ENCODE measurements at regions of chr6 and their contacts with region 1.

Region 1: GRCh38 chr6:56364827-56365313 is 117.5 kb upstream of the COL21A1 start:
- DNase-seq: no peak
- H3K4me3 ChIP-seq: no peak overlapping the region
- H3K27ac ChIP-seq: peak overlapping the region in 2 of 5 donors; percentile 11 to 32
- H3K4me1 ChIP-seq: peaks cover 10 to 28% of the 10 kb centered on the region in 2 donors
- H3K27me3 ChIP-seq: no peaks in the 10 kb centered on the region
- CTCF ChIP-seq: no peak
- POLR2A ChIP-seq: no peak

Region 2: DNA sequence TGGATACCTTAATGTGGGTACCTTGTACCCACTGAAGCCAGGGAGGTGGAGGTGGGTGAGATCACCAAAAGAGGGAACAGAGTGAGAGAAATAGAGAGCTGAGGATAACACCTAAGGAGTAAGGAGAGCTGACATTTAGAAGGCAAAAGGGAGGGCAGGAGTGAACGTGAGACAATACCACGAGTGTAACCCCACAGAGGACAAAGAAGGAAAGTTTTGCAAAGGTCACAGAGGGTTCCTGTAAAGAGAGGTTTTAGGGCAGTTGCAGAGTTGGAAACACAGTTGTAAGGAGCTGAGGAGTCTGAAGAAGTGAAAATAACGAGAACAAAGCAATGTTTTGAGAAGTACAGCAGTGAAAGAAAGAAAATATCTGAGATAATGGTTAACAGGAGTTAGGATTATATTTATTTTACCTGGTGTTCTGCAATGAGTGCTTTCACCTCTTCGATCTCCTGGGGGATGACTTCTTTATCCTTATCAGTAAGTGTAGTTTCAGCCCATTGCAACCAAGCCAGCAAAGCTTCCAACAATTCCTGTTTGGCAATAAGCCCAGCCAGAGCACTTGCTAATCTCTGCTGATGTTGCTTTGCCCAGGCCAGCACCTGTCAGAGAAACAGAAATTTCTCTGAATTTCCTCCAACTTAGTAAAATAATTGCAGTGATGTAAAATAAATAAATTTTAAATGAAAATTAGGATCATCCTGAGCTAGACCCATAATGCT is 111.0 kb after region 1 on chr6:
- intact Hi-C with region 1: no loop called
- DNase-seq: peak; percentile 59 to 89 (median 80)
- H3K4me3 ChIP-seq: no peak overlapping the region
- H3K27ac ChIP-seq: peak overlapping the region in 2 of 5 donors; percentile 27 to 52
- H3K4me1 ChIP-seq: peaks cover 16 to 21% of the 10 kb centered on the region in 2 donors
- H3K27me3 ChIP-seq: no peaks in the 10 kb centered on the region
- CTCF ChIP-seq: no peak
- POLR2A ChIP-seq: no peak

Region 3: DNA sequence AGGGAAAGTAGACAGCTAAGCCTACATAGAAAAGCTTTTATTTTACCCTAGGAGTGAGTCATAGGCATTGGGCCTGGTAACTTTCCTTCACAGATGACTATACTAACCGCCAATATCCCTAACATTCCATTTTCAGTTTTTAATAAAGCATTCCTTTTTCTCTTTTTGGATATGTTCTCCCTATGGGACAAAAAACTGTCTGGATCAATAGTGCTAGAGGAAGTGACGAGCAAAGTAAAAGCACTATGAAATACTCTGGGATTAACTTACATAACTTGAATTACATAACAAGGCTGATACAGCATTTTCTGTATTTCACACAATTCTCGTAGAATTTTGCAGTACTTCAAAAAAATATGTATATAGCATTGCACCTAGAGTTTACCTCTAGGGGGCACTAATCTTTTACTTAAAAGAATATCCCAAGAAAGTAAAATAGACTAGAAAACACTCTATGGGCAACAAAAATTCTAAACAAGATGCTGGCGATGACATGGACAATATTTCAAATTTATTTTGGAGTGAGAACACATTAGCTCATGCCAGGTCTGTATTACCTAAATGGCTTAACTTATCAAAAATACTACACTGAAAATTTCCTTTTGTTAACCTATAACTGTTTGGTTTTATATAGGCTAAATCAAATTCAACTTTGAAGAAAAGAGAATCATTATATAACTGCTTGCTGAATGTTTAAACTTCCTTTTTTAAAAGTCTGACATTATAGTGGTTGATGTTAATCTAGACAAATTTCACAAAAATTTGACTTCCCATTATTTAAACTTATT is 344.1 kb after region 1 on chr6:
- intact Hi-C with region 1: loop called in 1 of 2 experiments (anchors 10 kb)
- DNase-seq: no peak
- H3K4me3 ChIP-seq: no peak overlapping the region
- H3K27ac ChIP-seq: peak overlapping the region in 4 of 5 donors; percentile 34 to 66 (median 60)
- H3K4me1 ChIP-seq: peaks cover 13 to 30% of the 10 kb centered on the region in 2 donors
- H3K27me3 ChIP-seq: no peaks in the 10 kb centered on the region
- CTCF ChIP-seq: peak; percentile 40 to 68 (median 59)
- POLR2A ChIP-seq: no peak

Measured in adrenal gland (tissue), 19 donors.